Activated T-helper 2 cell treated with anti-CD3 and anti-CD28 coated beads, Interferon-gamma antibody, Interleukin-2, Interleukin-4, amounts not matched to agents 10 μg/mL and 5 μg/mL and 100 μg/mL, durations not matched to agents 14 hours and 24 hours and 36 hours (primary cell): ENCODE measurements at regions of chr4 and their contacts with region 1.

Region 1: DNA sequence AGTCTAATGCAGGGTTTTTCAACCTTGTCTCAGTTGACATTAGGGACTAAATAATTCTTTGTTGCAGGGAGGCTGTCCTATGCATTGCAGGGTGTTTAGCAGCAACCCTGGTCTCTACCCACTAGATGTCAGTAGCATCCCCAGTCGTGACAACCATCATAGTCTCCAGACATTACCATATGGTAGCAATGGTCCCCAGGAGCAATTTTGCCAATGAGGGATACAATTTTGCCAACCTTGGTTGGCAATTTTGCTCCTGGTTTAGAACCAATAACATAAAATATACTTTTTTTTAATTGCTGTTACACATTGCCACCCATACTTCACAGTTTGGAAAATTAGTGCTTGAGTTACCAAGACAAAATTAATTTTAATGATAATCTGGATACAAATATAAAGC is 6.0 kb downstream of the EREG start:
- DNase-seq: no peak
- H3K4me3 Mint-ChIP-seq: no peak overlapping the region
- H3K27ac Mint-ChIP-seq: no peak overlapping the region
- H3K4me1 Mint-ChIP-seq: peaks cover 6% of the 10 kb centered on the region
- H3K27me3 Mint-ChIP-seq: peaks cover 22% of the 10 kb centered on the region

Region 2: DNA sequence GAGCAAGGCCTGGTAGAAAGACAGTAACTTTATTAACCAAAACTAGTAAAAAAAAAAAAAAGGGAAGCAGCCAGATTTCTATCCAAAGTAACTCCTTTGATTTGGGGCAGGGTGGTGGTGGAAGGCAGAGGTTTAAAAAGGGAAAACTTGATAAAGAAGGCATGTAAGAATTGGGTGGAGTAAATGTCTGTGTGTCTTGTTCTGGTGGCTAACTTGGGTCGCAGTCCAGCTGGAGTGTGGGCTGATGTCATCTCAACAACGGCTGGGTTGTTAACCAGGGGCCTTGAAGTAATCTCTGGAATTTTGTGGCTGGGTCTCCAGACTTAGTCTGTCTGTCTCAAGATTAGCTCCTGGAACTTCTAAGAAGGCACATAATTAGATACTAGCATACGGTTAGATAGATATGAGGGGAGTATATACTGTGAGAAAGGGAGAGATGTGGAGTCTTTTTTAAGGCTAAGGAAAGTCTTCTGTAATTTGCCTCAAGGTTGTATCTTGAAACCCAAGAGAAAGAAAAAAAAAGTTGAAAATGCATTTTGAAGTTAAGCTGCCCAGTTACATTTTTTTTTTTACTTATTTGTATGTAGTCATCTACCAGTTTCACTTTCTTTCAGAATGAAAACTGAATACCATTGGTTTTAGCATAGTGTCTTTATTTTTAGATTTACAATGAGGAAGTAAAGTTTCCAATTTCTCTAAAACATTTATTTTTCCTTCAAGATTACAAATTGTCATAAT is 164.7 kb before region 1 on chr4:
- intact Hi-C with region 1: no loop called
- DNase-seq: no peak
- H3K4me3 Mint-ChIP-seq: no peak overlapping the region
- H3K27ac Mint-ChIP-seq: peak overlapping the region; percentile 5
- H3K4me1 Mint-ChIP-seq: peaks cover 12% of the 10 kb centered on the region
- H3K27me3 Mint-ChIP-seq: no peaks in the 10 kb centered on the region

Region 3: GRCh38 chr4:74293558-74293957 is 77.4 kb before region 1 on chr4:
- intact Hi-C with region 1: no loop called
- DNase-seq: no peak
- H3K4me3 Mint-ChIP-seq: no peak overlapping the region
- H3K27ac Mint-ChIP-seq: no peak overlapping the region
- H3K4me1 Mint-ChIP-seq: no peaks in the 10 kb centered on the region
- H3K27me3 Mint-ChIP-seq: no peaks in the 10 kb centered on the region

Region 4: DNA sequence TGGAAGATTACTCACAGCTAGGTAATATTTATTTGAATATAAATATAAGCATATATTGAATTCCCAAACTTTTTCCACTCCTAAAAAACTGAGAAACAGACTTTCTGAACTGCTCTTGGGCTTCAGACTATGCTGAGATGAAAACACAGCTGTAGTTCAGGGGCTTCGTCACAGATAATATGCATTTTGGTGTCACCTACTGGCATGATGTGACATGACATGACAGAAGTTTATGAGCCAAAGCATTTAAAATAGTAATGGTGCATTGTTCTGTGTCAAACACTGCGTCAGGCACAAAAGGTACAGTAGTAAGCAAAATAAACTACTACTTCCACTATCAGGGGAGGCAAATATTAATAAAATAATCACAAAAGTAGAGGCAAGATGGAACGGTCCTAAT is 252.1 kb after region 1 on chr4:
- intact Hi-C with region 1: loop called (anchors 5 kb)
- DNase-seq: no peak
- H3K4me3 Mint-ChIP-seq: no peak overlapping the region
- H3K27ac Mint-ChIP-seq: no peak overlapping the region
- H3K4me1 Mint-ChIP-seq: peaks cover 26% of the 10 kb centered on the region
- H3K27me3 Mint-ChIP-seq: peaks cover 2% of the 10 kb centered on the region